Activated CD4-positive, alpha-beta memory T cell treated with anti-CD3 and anti-CD28 coated beads, Interleukin-2, amount 10 ng/mL, durations not matched to agents 7 days and 5 days (primary cell): ENCODE measurements at regions of chr5 and their contacts with region 1.

Region 1: GRCh38 chr5:59133682-59134261 is 550.9 kb downstream of the RAB3C start:
- DNase-seq: no peak
- H3K4me3 Mint-ChIP-seq: no peak overlapping the region
- H3K27ac Mint-ChIP-seq: no peak overlapping the region
- H3K4me1 Mint-ChIP-seq: peaks cover 49% of the 10 kb centered on the region
- H3K27me3 Mint-ChIP-seq: no peaks in the 10 kb centered on the region

Region 2: GRCh38 chr5:59039296-59040023 is 94.3 kb before region 1 on chr5:
- CTCF ChIA-PET with region 1: interaction called, 40 read pairs
- POLR2A ChIA-PET with region 1: interaction called, 124 read pairs
- DNase-seq: peak; percentile 95
- H3K4me3 Mint-ChIP-seq: peak overlapping the region; percentile 84
- H3K27ac Mint-ChIP-seq: peak overlapping the region; percentile 97
- H3K4me1 Mint-ChIP-seq: peaks cover 46% of the 10 kb centered on the region
- H3K27me3 Mint-ChIP-seq: no peaks in the 10 kb centered on the region

Region 3: DNA sequence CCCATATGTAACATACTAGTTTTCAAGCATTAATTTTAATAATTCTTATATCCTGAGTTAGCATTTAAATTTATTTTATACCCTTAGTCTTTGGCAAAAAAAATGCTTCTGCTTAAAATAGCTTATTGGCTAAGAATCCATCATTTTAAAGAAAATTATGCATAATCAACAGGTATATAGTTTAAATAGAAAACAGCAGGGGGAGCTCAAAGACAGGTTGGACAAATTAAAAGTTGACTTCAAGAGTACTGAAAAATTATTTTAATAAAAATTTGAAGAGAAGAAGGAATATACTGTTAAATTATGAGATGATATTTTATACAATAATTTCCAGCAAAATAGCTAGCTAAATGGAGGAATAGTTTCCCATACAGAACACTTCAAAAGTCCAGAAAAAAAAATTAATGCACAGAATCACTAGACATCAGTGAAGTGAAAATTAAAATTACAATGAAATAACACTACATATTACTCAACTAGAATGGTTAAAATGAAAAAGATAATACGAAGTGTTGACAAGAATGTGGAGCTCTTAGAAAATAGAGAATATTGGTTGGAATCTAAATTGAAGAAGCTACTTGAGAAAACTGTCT is 372.6 kb after region 1 on chr5:
- CTCF ChIA-PET with region 1: no interaction called
- POLR2A ChIA-PET with region 1: no interaction called
- DNase-seq: no peak
- H3K4me3 Mint-ChIP-seq: no peak overlapping the region
- H3K27ac Mint-ChIP-seq: no peak overlapping the region
- H3K4me1 Mint-ChIP-seq: no peaks in the 10 kb centered on the region
- H3K27me3 Mint-ChIP-seq: peaks cover 11% of the 10 kb centered on the region